PC-3 (cell line): ENCODE measurements at regions of chr17 and their contacts with region 1.

Region 1: DNA sequence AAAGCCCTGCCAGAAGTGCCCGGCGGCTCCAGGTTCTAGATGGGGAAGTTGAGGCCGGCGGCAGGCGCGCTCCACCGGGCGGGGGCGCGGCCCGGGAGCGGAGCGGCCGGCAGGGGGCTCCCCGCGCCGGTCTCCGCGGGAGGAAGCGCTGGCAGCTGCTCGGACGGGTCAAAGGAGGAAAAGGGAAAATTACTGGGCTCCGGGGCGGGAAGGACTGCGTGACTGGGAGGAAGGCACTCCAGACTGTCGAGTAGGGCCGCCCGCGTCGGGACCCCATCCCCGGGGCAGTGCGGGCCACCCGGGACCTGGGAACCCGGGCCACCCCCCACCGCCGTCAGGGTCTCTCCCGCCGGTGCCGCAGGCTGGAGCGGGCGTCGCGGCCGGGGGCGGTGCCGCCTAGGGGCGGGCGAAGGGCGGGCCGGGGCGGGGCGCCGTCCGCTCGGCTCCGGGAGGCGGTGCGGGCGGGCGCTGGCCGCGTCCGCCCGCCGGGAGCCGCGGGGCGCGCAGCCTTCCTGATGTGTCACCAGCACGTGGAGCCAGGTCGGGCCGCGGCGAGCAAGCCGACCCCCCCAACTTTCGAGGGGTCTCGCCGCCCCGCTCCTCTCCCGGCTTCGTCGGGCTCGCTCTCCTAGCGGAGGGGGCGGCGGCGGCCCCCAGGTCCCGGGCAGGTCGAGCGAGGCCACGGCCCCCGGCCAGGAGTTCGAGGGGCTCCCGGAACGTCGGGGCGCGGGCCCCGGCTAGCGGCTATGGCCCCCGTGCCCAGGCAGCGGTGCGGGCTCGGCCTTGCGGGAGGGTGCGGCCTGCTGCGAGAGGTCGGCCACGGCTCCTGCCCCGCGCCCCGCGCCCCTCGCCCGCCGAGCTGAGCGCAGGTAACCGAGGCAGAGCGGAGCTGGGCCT is 167.5 kb downstream of the RAB11FIP4 start:
- DNase-seq: peak; percentile 64
- ATAC-seq: peak; percentile 73
- H3K4me3 ChIP-seq: peak overlapping the region; percentile 83
- H3K27ac ChIP-seq: peak overlapping the region; percentile 88
- H3K4me1 ChIP-seq: peaks cover 24% of the 10 kb centered on the region
- H3K27me3 ChIP-seq: no peaks in the 10 kb centered on the region
- CTCF ChIP-seq: peak; percentile 71

Region 2: DNA sequence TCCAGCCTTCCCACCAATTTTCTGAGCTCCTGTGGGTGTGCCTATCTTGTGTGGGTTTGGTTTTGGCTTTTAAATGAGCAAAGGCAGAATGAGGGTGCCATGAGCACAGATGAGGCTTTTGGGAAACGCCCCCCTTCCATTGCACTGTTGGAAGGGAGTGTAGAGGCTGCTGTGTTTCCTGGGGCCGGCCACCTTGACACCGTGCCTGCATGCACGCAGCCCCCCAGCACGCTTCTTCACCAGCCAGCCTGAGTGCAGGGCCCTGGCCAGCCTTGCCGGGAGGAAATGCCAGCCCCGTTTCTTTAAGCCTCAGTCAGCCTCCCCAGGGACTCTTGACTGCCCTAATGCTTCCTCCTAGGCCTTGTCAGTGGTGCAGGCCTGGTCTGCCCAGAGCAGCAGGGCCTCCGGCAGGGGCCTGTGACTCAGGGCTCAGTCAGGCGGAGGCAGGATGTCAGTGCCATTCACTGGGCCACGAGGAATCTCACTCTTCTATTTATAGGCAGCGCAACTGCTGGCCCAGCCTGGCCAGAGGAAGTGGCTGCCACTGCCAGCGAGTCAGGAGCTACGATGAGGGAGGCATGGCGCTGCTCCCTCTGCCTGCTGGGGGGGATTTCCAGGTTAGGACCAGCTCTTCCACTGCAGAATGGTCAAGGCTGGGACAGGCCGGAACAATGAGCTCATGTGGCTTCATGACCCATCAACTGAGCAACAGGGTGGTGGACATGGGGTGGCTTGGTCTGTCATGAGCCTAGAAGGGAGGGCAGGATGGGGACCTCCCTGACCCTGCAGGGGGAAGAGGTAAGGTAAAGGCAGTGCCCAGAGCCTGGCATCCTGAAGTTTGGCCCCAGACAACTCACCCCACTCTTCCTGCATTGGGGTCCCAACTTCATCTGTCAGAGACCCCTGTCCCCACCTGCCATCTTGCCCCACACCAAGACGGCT is 37.7 kb after region 1 on chr17:
- CTCF ChIA-PET with region 1: no interaction called
- POLR2A ChIA-PET with region 1: no interaction called
- intact Hi-C with region 1: loop called (anchors 2 kb)
- DNase-seq: peak; percentile 87
- ATAC-seq: peak; percentile 98
- H3K4me3 ChIP-seq: no peak overlapping the region
- H3K27ac ChIP-seq: peak overlapping the region; percentile 96
- H3K4me1 ChIP-seq: peaks cover 32% of the 10 kb centered on the region
- H3K27me3 ChIP-seq: no peaks in the 10 kb centered on the region
- CTCF ChIP-seq: no peak

Region 3: DNA sequence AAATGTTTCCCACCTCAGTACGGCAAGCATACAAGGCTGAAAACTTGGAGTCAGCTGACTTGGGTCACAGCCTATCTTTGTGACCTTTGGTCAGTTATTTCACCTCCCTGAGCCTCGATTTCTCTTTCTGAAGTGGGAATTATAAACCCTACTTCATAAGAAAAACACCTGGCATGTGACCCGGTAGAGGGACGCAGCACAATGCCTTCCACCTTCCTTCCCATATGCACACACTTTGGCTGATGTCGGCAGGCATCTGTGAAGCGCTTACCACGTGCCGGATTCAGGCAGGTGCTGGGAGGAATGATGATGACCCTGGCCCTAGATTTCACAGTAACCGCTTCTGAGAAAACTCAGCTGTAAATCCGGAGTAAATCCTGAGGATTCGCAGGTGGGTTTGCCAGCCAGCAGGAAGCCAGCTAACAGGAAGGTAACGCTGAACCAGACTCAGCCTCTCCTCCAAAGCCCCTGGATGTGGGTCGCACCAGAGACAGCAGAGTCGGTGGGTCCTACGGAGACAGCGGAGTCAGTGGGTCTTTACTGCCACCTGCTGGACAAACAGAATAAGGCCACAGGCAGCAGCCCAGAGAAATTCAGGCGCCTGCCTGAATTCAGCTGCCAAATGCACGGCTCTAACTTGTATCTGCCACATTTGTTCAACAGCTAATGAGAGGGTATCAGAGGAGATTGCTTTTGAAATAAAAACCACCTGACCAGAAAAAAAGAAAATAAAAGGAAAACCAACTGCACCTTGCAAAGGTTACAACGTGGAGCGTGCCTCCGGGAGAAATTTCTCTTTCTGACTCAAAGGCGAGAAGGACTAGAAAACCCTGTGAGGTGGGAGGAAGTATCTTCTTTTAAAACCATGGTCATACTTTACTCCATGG is 283.4 kb after region 1 on chr17:
- CTCF ChIA-PET with region 1: interaction called, 5 read pairs
- POLR2A ChIA-PET with region 1: no interaction called
- intact Hi-C with region 1: loop called (anchors 1 kb)
- DNase-seq: peak; percentile 64
- ATAC-seq: peak; percentile 88
- H3K4me3 ChIP-seq: peak overlapping the region; percentile 58
- H3K27ac ChIP-seq: no peak overlapping the region
- H3K4me1 ChIP-seq: peaks cover 15% of the 10 kb centered on the region
- H3K27me3 ChIP-seq: no peaks in the 10 kb centered on the region
- CTCF ChIP-seq: peak; percentile 85